ENCODE measurements at regions of chr17 and their contacts with region 1.

Region 1: DNA sequence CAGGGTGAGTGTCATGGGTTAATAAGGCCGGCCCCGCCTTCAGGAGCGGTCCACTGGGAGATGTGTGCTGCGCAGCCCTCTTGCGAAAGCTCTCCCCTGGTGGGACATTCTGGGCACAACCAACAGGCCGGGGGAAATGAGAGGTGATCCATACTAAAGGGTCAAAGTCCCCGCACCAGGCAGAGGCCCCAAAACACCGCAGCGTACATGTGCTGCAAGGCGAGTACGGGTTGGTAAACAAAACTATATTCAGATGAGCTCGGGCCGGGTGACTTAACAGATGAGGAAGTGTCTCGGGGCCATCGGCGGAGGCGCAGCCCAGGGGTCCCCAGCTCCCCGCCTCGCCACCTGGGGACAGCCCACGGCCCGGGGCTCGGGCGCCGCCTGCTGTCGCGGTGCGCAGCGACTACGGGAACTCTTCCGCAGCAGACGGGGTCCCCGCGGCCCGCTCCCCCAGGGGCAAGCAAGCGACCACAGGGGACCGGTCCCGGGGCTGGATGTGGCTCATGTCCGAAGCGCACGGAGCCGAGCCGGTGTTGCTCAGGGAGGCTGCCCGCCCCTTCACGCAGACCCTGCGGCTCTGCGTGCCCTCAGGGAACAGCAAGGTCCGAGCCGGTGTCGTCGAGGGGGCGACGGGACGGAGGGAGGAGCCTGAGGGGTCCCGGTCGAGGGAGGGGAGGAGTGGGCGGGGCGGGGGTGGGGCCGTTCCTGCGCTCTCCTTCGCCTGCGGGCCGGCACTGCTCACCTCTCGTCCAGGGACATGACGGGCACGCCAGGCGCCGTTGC is at the start of gene RAB37:
- DNase-seq: peak; percentile 87 to 90
- ATAC-seq: peak; percentile 70 to 76
- H3K4me3 ChIP-seq: peak within 1 kb of the TSS; percentile 40
- H3K27ac ChIP-seq: peak within 1 kb of the TSS; percentile 54 to 83
- H3K4me1 ChIP-seq: peaks cover 36% of the 10 kb centered on the region
- CTCF ChIP-seq: peak; percentile 63
- EP300 ChIP-seq: no peak
- POLR2A ChIP-seq: no peak
- RAD21 ChIP-seq: peak in 1 of 2 experiments; percentile 68; a peak in 4 of 5 replicates
- polyA plus RNA-seq, gene RAB37: 15.8 and 18.7 TPM in 2 replicates

Region 2: DNA sequence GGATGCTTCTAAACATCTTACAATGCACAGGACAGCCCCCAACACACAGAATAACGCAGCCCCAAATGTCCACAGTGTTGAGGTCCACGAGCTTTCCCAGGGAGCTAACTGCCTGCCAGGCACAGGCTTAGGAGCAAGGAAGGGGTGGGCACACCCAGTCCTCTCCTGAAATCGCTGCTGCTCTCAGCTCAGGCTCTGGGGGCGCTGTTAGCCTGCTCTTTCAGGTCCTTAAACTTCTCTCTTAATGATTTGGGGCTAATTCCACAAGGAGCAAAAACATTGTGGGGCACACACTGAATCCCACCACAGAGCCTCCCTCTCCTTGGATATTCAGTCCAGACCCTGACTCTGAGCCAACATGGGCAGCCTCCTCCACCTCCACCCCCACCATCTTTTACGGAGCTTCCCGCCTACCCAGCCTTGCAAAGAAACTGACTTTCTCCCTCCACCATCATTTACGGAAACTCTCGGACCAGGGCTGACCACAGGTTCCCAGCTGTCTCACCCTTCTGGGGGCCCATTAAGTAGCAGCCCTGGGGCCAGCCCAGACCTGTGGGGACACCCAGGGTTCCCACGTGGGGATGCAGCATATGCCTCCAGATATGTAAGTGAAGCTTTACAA is 170.5 kb before region 1 on chr17:
- CTCF ChIA-PET with region 1: interaction called, 46 read pairs
- POLR2A ChIA-PET with region 1: no interaction called
- DNase-seq: peak; percentile 51 to 66
- ATAC-seq: peak in 1 of 2 experiments; percentile 67; a peak in 3 of 6 replicates
- H3K4me3 ChIP-seq: no peak overlapping the region
- H3K27ac ChIP-seq: peak overlapping the region in 1 of 2 experiments; percentile 41; a peak in 1 of 6 replicates
- H3K4me1 ChIP-seq: peaks cover 27% of the 10 kb centered on the region
- CTCF ChIP-seq: peak; percentile 68
- EP300 ChIP-seq: no peak
- POLR2A ChIP-seq: no peak
- RAD21 ChIP-seq: peak; percentile 64 to 75

Region 3: GRCh38 chr17:74646231-74646630 is 90.5 kb before region 1 on chr17:
- CTCF ChIA-PET with region 1: interaction called, 11 read pairs
- POLR2A ChIA-PET with region 1: no interaction called
- DNase-seq: peak; percentile 62 to 74
- ATAC-seq: peak in 1 of 2 experiments; percentile 81; a peak in 3 of 6 replicates
- H3K4me3 ChIP-seq: no peak overlapping the region
- H3K27ac ChIP-seq: no peak overlapping the region
- H3K4me1 ChIP-seq: no peaks in the 10 kb centered on the region
- CTCF ChIP-seq: peak; percentile 51
- EP300 ChIP-seq: no peak
- POLR2A ChIP-seq: no peak
- RAD21 ChIP-seq: peak; percentile 38 to 62; a peak in 4 of 5 replicates

Region 4: DNA sequence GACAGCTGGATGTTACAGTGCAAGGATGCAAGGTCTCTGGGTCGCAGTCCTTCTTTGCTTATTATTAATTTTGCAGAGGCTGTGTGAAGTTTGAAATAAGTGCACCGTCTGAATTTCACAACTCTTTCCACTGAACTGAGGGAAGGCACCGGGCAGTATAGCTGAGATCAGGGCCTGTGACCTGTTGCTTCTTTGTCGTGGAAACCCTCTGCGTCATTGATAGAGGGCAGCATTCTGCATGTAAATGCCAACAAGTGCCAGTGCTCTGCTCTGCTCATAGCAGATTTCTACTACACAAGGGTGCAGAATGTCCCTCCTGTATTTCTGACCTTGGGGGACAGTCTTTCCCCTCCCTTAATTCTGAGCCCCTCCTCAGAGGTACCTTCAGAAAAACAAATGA is 49.9 kb before region 1 on chr17:
- CTCF ChIA-PET with region 1: interaction called, 14 read pairs
- POLR2A ChIA-PET with region 1: no interaction called
- DNase-seq: peak in 1 of 2 experiments; percentile 29
- ATAC-seq: peak; percentile 65 to 75; a peak in 4 of 6 replicates
- H3K4me3 ChIP-seq: no peak overlapping the region
- H3K27ac ChIP-seq: no peak overlapping the region
- H3K4me1 ChIP-seq: no peaks in the 10 kb centered on the region
- CTCF ChIP-seq: no peak
- EP300 ChIP-seq: no peak
- POLR2A ChIP-seq: no peak
- RAD21 ChIP-seq: no peak

Region 5: GRCh38 chr17:74723891-74724290 is 12.8 kb before region 1 on chr17:
- CTCF ChIA-PET with region 1: interaction called, 48 read pairs
- POLR2A ChIA-PET with region 1: no interaction called
- DNase-seq: no peak
- ATAC-seq: no peak
- H3K4me3 ChIP-seq: no peak overlapping the region
- H3K27ac ChIP-seq: no peak overlapping the region
- H3K4me1 ChIP-seq: no peaks in the 10 kb centered on the region
- CTCF ChIP-seq: no peak
- EP300 ChIP-seq: no peak
- POLR2A ChIP-seq: no peak
- RAD21 ChIP-seq: no peak

Region 6: DNA sequence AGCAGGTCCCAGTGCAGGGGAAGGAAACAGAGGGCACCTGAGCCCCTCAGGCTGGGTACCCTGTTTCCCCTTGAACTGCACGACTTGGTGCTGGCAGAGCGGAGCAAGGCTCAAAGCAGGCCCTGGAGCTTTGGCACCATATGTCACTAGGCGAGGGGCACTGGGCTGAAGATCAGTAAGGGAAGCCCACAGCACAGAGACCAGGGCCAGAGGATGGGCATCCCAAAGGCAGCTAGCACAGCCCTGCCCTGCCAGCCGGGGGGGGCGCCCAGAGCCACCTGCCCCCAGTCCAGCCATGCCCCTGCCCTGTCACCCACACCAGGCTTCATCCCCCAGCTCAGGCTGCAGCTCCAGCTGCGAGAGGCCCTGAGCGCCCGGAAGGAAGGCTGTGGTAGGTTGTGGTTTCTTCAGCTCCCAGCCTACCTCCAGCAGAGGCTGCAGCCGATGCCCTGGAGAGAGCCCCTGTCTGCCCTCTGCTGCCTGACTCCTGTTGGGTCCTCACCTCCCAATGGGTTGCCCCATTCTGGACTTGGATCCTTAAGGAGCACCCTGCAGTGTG is 22.6 kb after region 1 on chr17:
- CTCF ChIA-PET with region 1: interaction called, 32 read pairs
- POLR2A ChIA-PET with region 1: no interaction called
- DNase-seq: no peak
- ATAC-seq: peak; percentile 6 to 38; a peak in 3 of 6 replicates
- H3K4me3 ChIP-seq: no peak overlapping the region
- H3K27ac ChIP-seq: peak overlapping the region; percentile 57 to 79
- H3K4me1 ChIP-seq: peaks cover 69% of the 10 kb centered on the region
- CTCF ChIP-seq: no peak
- EP300 ChIP-seq: no peak
- POLR2A ChIP-seq: no peak
- RAD21 ChIP-seq: no peak

Region 7: DNA sequence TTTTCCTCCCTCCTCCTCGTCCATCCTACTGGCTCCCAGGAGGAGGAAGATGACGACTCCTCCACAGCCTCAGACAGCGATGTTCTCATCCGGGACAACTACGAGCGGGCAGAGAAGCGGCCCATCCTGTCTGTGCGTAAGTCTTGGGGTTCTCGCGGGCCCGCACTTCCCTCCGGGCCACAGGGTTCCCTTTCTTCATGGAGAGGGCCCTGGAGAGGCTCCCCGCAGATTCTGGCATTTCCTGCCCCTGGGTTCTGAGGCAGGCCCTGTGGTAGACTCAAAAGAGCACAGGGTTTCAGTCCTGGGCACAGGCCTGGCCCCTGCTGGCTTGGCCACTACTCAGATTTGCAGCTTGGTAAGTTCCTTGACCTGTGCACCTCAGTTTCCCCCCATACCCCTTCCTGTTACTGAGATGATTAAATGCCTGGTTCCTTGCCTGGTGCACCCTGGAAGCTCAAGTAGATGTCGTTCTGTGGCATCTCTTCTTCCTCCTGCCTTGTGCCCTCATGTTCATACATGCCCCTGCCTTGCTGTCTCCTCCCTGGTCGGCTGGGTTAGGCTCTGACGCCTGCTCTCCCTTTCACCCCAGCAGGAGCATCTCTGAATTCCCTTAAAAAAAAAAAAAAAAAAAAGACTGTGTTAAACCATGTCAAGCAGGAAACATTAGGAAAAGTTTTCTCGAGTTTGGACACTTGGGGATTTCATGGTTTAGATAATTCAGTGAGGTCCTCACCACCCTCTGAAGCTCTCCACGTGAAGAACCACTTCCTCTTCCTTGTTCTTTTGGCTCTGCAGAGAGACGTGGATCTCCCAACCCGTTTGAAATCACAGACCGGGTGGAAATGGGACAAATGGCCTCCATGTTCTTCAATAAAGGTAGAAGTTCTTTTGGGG is 53.7 kb after region 1 on chr17:
- CTCF ChIA-PET with region 1: interaction called, 28 read pairs
- POLR2A ChIA-PET with region 1: no interaction called
- DNase-seq: no peak
- ATAC-seq: no peak
- H3K4me3 ChIP-seq: no peak overlapping the region
- H3K27ac ChIP-seq: no peak overlapping the region
- H3K4me1 ChIP-seq: no peaks in the 10 kb centered on the region
- CTCF ChIP-seq: no peak
- EP300 ChIP-seq: no peak
- POLR2A ChIP-seq: no peak
- RAD21 ChIP-seq: no peak